ENCODE measurements at regions of chr2 and their contacts with region 1.

Region 1: DNA sequence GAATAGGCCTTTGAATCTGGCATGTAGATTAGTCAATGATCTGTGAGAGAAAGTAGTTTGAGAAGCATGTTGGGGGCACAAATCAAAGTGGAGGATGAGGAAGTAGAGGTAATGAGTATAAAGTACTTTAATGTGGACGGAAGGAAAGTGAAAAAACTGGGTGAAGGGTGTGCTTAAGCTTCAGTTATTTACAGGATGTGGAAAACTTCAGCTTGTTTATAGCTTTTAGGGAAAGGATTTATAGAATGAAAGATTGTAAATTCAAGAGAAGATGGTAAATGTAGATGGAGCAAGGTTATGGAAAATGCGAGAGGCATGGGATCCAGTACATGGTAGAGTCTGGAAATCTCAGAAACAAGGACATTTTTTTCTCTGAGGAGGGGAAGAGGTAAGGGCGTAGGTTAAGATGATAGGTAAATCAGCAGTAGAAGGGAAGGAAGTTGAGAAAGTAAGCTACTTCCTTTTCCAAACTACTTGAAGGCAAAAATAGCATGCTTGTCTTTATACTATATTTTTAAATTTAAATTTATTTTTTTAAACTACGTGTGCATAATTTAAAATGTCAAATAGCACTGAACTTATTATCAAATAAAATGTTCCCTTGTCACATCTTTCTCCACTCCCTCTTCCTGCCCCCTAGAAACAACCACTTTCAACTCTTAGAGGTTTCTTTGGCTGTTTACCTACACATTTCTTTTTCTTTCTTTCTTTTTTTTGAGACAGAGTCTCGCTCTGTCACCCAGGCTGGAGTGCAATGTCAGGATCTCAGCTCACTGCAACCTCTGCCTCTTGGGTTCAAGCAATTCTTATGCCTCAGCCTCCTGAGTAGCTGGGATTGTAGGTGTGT is 8.5 kb downstream of the FAM117B start:
- DNase-seq: peak in 4 of 9 experiments; percentile 9 to 81 (median 40)
- ATAC-seq: peak; percentile 75
- H3K4me3 ChIP-seq: peak overlapping the region; percentile 2 to 30
- H3K4me3 Mint-ChIP-seq: peak overlapping the region; percentile 76
- H3K27ac ChIP-seq: peak overlapping the region; percentile 38 to 83
- H3K27ac Mint-ChIP-seq: no peak overlapping the region
- H3K4me1 ChIP-seq: peaks cover 75% of the 10 kb centered on the region
- H3K4me1 Mint-ChIP-seq: peaks cover 61% of the 10 kb centered on the region
- H3K27me3 ChIP-seq: no peaks in the 10 kb centered on the region
- H3K27me3 Mint-ChIP-seq: no peaks in the 10 kb centered on the region
- CTCF ChIP-seq: no peak

Region 2: GRCh38 chr2:202653890-202654289 is 10.7 kb after region 1 on chr2:
- CTCF ChIA-PET with region 1: interaction called, 3 read pairs
- POLR2A ChIA-PET with region 1: interaction called, 12 read pairs
- intact Hi-C with region 1: loop called (anchors 1 to 2 kb)
- DNase-seq: peak in 1 of 9 experiments; percentile 35
- ATAC-seq: no peak
- H3K4me3 ChIP-seq: no peak overlapping the region
- H3K4me3 Mint-ChIP-seq: peak overlapping the region; percentile 9
- H3K27ac ChIP-seq: no peak overlapping the region
- H3K27ac Mint-ChIP-seq: peak overlapping the region; percentile 85
- H3K4me1 ChIP-seq: peaks cover 74% of the 10 kb centered on the region
- H3K4me1 Mint-ChIP-seq: peaks cover 86% of the 10 kb centered on the region
- H3K27me3 ChIP-seq: peaks cover 0 to 2% of the 10 kb centered on the region in 2 experiments
- H3K27me3 Mint-ChIP-seq: no peaks in the 10 kb centered on the region
- CTCF ChIP-seq: no peak

Region 3: DNA sequence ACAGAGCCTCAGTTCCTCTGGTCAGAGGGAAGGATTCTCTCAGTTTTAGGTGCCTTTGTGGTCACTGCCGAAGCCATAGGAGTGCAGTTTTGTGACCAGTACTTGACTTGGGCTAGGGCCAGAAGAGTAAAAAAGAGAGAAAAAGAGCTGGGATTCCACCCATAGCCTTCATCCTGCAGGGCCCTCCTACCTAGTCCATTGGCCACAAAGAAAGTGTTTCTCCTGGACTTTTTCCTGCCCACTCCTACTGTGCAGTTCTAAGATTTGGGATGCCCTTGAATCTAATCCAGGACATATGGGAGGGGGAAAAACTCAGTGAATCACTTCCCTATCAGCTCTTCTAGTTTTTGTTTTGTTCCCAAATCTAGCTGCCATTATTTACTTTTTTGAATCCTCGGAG is 17.6 kb after region 1 on chr2:
- CTCF ChIA-PET with region 1: interaction called, 3 read pairs
- POLR2A ChIA-PET with region 1: interaction called, 12 read pairs
- intact Hi-C with region 1: loop called (anchors 1 to 2 kb)
- DNase-seq: no peak
- ATAC-seq: no peak
- H3K4me3 ChIP-seq: no peak overlapping the region
- H3K4me3 Mint-ChIP-seq: no peak overlapping the region
- H3K27ac ChIP-seq: no peak overlapping the region
- H3K27ac Mint-ChIP-seq: peak overlapping the region; percentile 72
- H3K4me1 ChIP-seq: peaks cover 65% of the 10 kb centered on the region
- H3K4me1 Mint-ChIP-seq: peaks cover 78% of the 10 kb centered on the region
- H3K27me3 ChIP-seq: no peaks in the 10 kb centered on the region
- H3K27me3 Mint-ChIP-seq: no peaks in the 10 kb centered on the region
- CTCF ChIP-seq: no peak

Region 4: DNA sequence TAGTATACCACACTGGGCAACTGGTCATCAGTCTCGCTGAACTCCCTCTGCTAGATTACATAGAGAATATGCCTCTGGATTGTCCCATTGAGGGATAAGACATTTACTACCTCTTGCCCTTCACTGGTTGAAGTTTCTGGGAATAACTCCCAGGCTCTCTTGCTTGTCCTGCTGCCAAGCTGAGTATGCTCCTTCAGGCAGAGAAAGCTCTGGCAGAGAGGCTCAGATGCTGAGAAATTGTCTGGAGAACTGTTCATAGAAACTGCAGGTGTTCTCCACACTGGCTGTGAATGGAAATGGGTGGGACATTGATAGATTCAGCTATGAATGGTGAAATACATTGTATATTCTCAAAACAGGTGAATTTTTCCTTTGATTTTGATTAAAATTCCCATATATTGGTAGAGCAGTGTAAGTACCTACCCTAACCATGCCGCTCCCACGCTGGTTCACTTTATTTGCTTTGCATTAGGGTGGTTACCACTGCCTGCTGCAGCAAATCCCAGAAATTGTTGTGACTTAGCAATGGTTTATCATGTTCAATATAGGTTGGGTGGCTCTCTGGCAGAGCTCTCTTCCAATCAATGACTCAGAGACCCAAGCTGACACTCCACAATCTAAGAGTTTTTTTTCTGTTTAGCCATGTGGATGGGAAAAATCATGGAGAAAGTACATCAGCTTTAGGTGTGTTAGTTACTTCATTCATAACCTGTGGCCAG is 28.2 kb after region 1 on chr2:
- CTCF ChIA-PET with region 1: no interaction called
- POLR2A ChIA-PET with region 1: interaction called, 3 read pairs
- intact Hi-C with region 1: loop called in 1 of 2 experiments (anchors 2 kb)
- DNase-seq: no peak
- ATAC-seq: no peak
- H3K4me3 ChIP-seq: no peak overlapping the region
- H3K4me3 Mint-ChIP-seq: no peak overlapping the region
- H3K27ac ChIP-seq: no peak overlapping the region
- H3K27ac Mint-ChIP-seq: no peak overlapping the region
- H3K4me1 ChIP-seq: peaks cover 77% of the 10 kb centered on the region
- H3K4me1 Mint-ChIP-seq: peaks cover 74% of the 10 kb centered on the region
- H3K27me3 ChIP-seq: no peaks in the 10 kb centered on the region
- H3K27me3 Mint-ChIP-seq: no peaks in the 10 kb centered on the region
- CTCF ChIP-seq: no peak

Region 5: DNA sequence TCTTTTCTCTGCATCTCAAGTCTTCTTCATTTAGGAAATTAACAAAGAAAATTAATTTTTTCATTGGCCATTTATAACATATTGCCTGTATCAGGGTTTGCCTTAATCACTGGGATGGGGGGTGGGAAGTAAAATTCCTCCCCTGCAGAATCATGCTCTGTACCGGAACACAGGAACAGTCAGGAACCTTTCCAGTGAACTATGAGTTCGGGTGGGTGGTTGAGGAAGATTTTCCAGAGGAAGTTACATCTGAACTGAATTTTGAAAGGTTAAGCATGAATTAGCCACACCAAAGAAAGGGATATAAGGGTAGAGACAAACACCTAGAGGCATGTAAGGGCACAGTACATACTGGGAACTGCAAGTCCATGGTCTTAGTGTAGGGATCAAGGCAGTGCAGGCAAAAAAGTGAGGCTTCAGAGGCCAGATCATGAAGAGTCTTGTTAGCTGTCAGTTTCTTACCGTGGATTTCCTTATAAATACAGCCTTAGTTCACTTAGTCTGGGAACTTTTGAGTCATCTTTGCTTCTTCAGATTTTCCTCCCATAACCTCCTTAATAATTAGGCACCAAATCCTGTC is 47.2 kb after region 1 on chr2:
- CTCF ChIA-PET with region 1: no interaction called
- POLR2A ChIA-PET with region 1: interaction called, 3 read pairs
- intact Hi-C with region 1: loop called in 1 of 2 experiments (anchors 10 kb)
- DNase-seq: peak in 1 of 9 experiments; percentile 19
- ATAC-seq: no peak
- H3K4me3 ChIP-seq: no peak overlapping the region
- H3K4me3 Mint-ChIP-seq: no peak overlapping the region
- H3K27ac ChIP-seq: no peak overlapping the region
- H3K27ac Mint-ChIP-seq: peak overlapping the region; percentile 58
- H3K4me1 ChIP-seq: peaks cover 18% of the 10 kb centered on the region
- H3K4me1 Mint-ChIP-seq: peaks cover 73% of the 10 kb centered on the region
- H3K27me3 ChIP-seq: no peaks in the 10 kb centered on the region
- H3K27me3 Mint-ChIP-seq: no peaks in the 10 kb centered on the region
- CTCF ChIP-seq: no peak